Esophagus muscularis mucosa (tissue), 4 donors: ENCODE measurements at regions of chrX and their contacts with region 1.

Region 1: GRCh38 chrX:33434256-33435092 is 223.1 kb upstream of the DMD start:
- DNase-seq: no peak
- H3K4me3 ChIP-seq: no peak overlapping the region
- H3K27ac ChIP-seq: no peak overlapping the region
- H3K4me1 ChIP-seq: no peaks in the 10 kb centered on the region
- H3K27me3 ChIP-seq: no peaks in the 10 kb centered on the region
- CTCF ChIP-seq: peak; percentile 74 to 85 (median 78)
- EP300 ChIP-seq: no peak
- POLR2A ChIP-seq: no peak

Region 2: GRCh38 chrX:34300871-34301270 is 866.4 kb after region 1 on chrX:
- intact Hi-C with region 1: loop called (anchors 5 kb)
- DNase-seq: no peak
- H3K4me3 ChIP-seq: no peak overlapping the region
- H3K27ac ChIP-seq: no peak overlapping the region
- H3K4me1 ChIP-seq: no peaks in the 10 kb centered on the region
- H3K27me3 ChIP-seq: no peaks in the 10 kb centered on the region
- CTCF ChIP-seq: peak; percentile 17 to 55 (median 42)
- EP300 ChIP-seq: no peak
- POLR2A ChIP-seq: no peak